Activated CD4-positive, alpha-beta T cell treated with anti-CD3 and anti-CD28 coated beads for 36 hours (primary cell): ENCODE measurements at regions of chr3 and their contacts with region 1.

Region 1: GRCh38 chr3:105868742-105869530 is at the start of gene CBLB:
- DNase-seq: peak; percentile 91
- ATAC-seq: peak; percentile 86
- H3K4me3 Mint-ChIP-seq: peak within 1 kb of the TSS; percentile 100
- H3K27ac Mint-ChIP-seq: peak within 1 kb of the TSS; percentile 100
- H3K4me1 Mint-ChIP-seq: peaks cover 36% of the 10 kb centered on the region
- H3K27me3 Mint-ChIP-seq: no peaks in the 10 kb centered on the region
- total RNA-seq, gene CBLB: 112 to 163 TPM

Region 2: DNA sequence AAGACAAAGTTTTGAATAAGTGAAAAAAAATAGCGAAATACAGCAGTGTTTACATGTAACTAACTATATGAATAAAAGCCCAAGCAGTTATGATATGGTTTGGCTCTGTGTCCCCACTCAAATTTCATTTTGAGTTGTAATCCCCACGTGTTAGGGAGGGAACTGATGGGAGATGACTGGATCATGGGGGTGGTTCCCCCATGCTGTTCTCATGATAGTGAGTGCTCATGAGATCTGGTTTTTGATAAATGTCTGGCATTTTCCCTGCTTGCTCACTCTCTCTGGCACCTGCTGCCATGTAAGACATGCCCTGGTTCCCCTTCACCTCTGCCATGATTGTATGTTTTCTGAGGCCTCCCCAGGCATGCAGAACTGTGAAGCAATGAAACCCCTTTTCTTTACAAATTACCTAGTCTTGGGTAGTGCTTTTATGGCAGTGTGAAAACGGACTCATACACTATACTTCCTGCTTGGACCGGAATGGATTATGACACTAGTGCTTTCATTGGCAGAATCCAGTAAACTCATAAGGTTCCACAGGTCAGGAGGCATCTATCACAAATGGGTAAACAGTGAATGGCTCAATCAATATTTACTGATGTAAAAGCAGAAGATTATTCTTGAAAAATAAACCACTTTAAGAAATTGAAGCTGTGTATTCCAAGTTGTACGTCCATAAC is 192.2 kb before region 1 on chr3:
- CTCF ChIA-PET with region 1: interaction called, 3 read pairs
- POLR2A ChIA-PET with region 1: no interaction called
- intact Hi-C with region 1: loop called in 1 of 2 experiments (anchors 2 kb)
- DNase-seq: peak; percentile 74
- ATAC-seq: peak; percentile 94
- H3K4me3 Mint-ChIP-seq: peak overlapping the region; percentile 27
- H3K27ac Mint-ChIP-seq: peak overlapping the region; percentile 87
- H3K4me1 Mint-ChIP-seq: peaks cover 27% of the 10 kb centered on the region
- H3K27me3 Mint-ChIP-seq: no peaks in the 10 kb centered on the region

Region 3: GRCh38 chr3:105774444-105775180 is 94.3 kb before region 1 on chr3:
- CTCF ChIA-PET with region 1: no interaction called
- POLR2A ChIA-PET with region 1: no interaction called
- intact Hi-C with region 1: loop called in 1 of 2 experiments (anchors 5 kb)
- DNase-seq: no peak
- ATAC-seq: peak; percentile 72
- H3K4me3 Mint-ChIP-seq: peak overlapping the region; percentile 12
- H3K27ac Mint-ChIP-seq: peak overlapping the region; percentile 78
- H3K4me1 Mint-ChIP-seq: peaks cover 81% of the 10 kb centered on the region
- H3K27me3 Mint-ChIP-seq: no peaks in the 10 kb centered on the region

Region 4: GRCh38 chr3:106013971-106014370 is 145.0 kb after region 1 on chr3:
- CTCF ChIA-PET with region 1: no interaction called
- POLR2A ChIA-PET with region 1: no interaction called
- intact Hi-C with region 1: loop called (anchors 5 kb)
- DNase-seq: peak; percentile 19
- ATAC-seq: peak; percentile 72
- H3K4me3 Mint-ChIP-seq: no peak overlapping the region
- H3K27ac Mint-ChIP-seq: peak overlapping the region; percentile 68
- H3K4me1 Mint-ChIP-seq: peaks cover 50% of the 10 kb centered on the region
- H3K27me3 Mint-ChIP-seq: no peaks in the 10 kb centered on the region

Region 5: DNA sequence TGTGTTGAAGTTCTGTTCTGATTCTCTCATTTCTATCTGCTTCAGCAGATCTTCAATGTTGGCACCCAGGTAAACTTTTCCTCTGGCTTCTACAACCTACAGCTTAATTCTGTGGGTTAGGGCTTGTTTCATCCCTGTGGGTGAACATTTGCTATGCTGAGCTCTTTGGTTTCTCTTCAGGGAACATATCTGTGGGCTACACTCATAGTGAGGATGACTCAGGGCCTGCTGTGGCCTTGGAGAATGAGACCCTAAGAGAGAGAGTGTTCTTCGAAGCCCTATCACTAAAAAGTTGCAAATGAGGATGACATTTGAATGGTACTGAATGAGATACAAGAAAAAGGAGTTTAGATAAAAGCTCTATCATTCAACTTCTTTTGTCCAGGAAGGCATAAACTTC is 346.1 kb after region 1 on chr3:
- CTCF ChIA-PET with region 1: no interaction called
- POLR2A ChIA-PET with region 1: interaction called, 9 read pairs
- intact Hi-C with region 1: loop called in 1 of 2 experiments (anchors 5 kb)
- DNase-seq: peak; percentile 62
- ATAC-seq: peak; percentile 91
- H3K4me3 Mint-ChIP-seq: no peak overlapping the region
- H3K27ac Mint-ChIP-seq: peak overlapping the region; percentile 73
- H3K4me1 Mint-ChIP-seq: peaks cover 59% of the 10 kb centered on the region
- H3K27me3 Mint-ChIP-seq: no peaks in the 10 kb centered on the region

Region 6: DNA sequence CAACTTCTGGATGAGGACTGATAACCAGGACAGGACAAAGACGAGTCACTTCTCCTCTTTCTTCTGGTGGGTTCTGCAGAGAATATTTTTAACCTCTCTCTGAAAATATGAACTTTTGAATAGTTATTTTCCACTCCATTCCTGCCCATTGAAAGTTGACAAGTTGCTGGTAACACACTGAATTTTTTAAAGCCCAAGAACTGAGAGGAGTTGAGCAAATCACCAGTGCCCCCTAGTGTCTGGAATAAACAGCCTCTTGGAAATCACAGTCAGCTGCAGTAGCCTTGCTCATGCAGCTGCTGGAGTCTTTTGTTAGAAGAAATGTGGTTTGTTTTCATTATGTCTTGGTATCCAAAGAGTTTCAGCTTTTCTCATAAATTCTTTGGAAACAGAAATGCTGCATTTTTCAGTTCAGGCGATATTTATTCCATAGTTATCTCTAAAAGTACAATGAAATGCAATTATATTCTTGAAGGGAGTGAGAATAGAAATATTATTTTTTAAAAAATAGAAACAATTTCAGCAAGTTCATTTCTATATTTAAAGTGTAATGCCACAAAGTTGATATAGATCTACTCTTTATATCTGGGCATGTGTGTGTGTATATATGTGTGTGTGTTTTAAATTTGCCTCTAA is 740.8 kb after region 1 on chr3:
- CTCF ChIA-PET with region 1: interaction called, 3 read pairs
- POLR2A ChIA-PET with region 1: interaction called, 3 read pairs
- intact Hi-C with region 1: loop called (anchors 5 kb)
- DNase-seq: peak; percentile 78
- ATAC-seq: peak; percentile 81
- H3K4me3 Mint-ChIP-seq: no peak overlapping the region
- H3K27ac Mint-ChIP-seq: peak overlapping the region; percentile 81
- H3K4me1 Mint-ChIP-seq: peaks cover 29% of the 10 kb centered on the region
- H3K27me3 Mint-ChIP-seq: peaks cover 4% of the 10 kb centered on the region